Aorta (tissue), 5 donors: ENCODE measurements at regions of chr4 and their contacts with region 1.

Region 1: DNA sequence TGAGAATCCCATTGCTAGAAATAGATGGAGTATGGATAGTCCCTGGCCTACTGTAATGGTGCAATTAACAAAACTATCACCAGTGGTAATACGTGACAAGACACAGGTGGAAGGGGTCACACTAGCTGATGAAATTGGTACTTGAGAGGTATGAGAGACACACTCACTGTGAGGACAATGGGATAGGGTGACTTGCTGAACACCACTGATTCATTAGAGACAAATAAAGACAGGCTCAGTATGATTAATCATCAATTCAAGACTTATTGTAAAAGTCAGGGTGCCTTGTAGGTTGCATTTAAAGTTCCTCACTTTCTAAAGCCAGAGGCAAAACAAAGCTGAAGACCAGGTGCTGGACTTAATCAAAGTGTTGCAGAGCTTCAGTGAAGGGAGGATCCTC is 361.6 kb upstream of the EMCN start:
- DNase-seq: no peak
- ATAC-seq: no peak
- H3K4me3 ChIP-seq: no peak overlapping the region
- H3K27ac ChIP-seq: no peak overlapping the region
- H3K4me1 ChIP-seq: no peaks in the 10 kb centered on the region
- H3K27me3 ChIP-seq: no peaks in the 10 kb centered on the region

Region 2: DNA sequence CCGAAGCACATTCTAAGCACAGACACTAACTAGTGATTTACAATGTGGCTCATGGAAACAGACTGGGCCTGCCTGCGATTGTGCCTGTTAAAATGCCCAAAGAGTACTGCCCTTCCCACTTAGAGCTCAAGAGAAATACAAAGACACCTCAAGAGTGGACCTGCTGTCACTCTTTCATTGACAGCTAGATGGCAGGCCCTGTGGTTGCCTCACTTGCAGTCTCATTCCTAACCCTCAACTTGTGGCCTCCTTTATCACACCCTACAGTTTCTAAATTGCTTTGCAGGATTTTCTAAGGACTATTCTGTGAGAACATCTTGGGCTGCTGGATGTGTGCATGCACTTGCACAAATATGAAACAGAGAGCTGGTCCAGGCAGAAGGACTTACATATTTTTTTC is 30.6 kb before region 1 on chr4:
- intact Hi-C with region 1: loop called in 1 of 2 experiments (anchors 2 kb)
- DNase-seq: no peak
- ATAC-seq: no peak
- H3K4me3 ChIP-seq: no peak overlapping the region
- H3K27ac ChIP-seq: no peak overlapping the region
- H3K4me1 ChIP-seq: peaks cover 0 to 1% of the 10 kb centered on the region in 2 donors
- H3K27me3 ChIP-seq: no peaks in the 10 kb centered on the region